Naive thymus-derived CD4-positive, alpha-beta T cell (primary cell): ENCODE measurements at regions of chr6 and their contacts with region 1.

Region 1: DNA sequence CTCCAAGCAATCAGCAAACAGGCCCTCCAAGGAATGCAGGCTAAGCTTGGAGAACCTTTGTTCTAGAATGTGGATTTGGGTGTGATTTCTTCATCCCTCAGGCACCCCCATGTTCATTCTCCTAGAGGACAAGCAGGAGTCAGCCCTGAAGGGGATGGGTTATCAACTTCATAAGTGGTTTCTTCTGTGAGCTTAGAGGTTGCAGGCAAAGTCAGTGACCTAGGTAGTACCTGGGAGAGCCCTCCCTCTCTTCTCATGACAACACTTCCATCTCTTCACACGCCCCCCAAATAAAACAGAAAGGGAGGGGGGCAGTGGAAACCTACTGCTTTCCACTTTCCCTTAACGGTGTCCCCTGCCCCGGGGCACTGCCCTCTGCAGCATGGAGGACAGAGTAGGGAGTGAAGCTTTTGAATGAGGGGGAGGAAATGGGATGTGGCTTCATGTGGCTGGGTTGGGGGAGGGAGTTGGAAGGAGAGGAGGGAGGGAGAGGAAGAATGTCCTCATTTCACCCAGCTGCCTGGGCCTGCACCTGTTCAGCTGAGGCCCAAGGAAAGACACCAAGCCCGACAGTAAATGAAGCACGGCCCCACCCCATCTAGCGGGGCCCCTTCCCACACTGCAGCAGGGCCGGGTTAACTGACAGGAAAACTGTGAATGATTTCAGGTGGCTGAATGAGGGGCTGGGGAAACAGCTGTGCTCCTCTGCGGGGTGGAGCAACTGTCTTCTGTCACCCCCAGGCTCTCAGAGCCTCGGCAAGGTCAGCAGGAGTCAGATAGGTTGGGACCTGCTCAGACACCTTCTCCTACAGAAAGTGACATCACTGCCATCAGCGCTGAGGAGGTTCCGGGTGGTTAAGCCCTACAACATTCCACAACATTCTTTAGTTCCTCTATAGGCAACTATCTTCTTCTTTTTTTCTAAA is 40.1 kb upstream of the TAF8 start:
- DNase-seq: peak in 3 of 9 donors; percentile 21 to 35 (median 30)
- ATAC-seq: peak; percentile 53
- H3K4me3 ChIP-seq: no peak overlapping the region
- H3K4me3 Mint-ChIP-seq: peak overlapping the region; percentile 54 to 84 (median 72)
- H3K27ac ChIP-seq: peak overlapping the region; percentile 65
- H3K27ac Mint-ChIP-seq: peak overlapping the region; percentile 73 to 93 (median 88)
- H3K4me1 ChIP-seq: peaks cover 37 to 56% of the 10 kb centered on the region in 2 donors
- H3K4me1 Mint-ChIP-seq: peaks cover 71 to 90% (median 83%) of the 10 kb centered on the region in 7 donors
- H3K27me3 ChIP-seq: no peaks in the 10 kb centered on the region
- H3K27me3 Mint-ChIP-seq: no peaks in the 10 kb centered on the region

Region 2: DNA sequence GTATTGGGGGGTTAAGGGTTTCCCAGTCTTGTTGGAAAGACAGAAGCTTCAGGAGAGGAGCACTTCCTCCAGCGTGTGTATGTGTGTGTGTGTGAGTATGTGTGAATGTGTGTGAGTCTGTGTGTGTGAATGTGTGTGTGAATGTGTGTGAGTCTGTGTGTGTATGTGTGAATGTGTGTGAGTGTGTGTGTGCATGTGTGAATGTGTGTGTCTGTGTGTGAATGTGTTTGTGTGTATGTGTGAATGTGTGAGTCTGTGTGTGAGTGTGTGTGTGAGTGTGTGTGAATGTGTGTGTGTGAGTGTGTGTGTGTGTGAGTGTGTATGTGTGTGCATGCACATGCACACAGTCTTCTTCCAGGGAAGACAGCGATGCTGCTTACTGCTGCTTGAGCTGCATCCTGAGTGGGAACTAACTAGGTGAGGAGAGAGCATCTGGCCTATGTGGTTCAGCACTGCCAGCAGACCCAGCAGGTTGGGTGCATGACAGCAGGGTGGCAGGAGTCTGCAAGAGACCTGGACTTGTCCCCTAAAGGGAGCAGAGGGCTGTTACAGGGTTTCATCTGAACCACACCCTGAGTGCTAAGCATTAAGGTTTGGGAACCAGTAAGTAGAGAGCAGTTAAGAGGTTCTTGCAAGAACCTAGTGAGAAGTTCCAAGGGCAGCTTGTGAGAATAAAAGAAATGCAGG is 45.9 kb before region 1 on chr6:
- CTCF ChIA-PET with region 1: no interaction called
- POLR2A ChIA-PET with region 1: no interaction called
- intact Hi-C with region 1: loop called in 1 of 2 experiments (anchors 5 kb)
- DNase-seq: peak in 1 of 9 donors; percentile 17
- ATAC-seq: no peak
- H3K4me3 ChIP-seq: no peak overlapping the region
- H3K4me3 Mint-ChIP-seq: peak overlapping the region in 7 of 10 donors; percentile 2 to 46 (median 6)
- H3K27ac ChIP-seq: peak overlapping the region; percentile 55
- H3K27ac Mint-ChIP-seq: peak overlapping the region; percentile 3 to 77 (median 69)
- H3K4me1 ChIP-seq: peaks cover 31 to 46% of the 10 kb centered on the region in 2 donors
- H3K4me1 Mint-ChIP-seq: peaks cover 52 to 94% (median 77%) of the 10 kb centered on the region in 7 donors
- H3K27me3 ChIP-seq: no peaks in the 10 kb centered on the region
- H3K27me3 Mint-ChIP-seq: no peaks in the 10 kb centered on the region

Region 3: DNA sequence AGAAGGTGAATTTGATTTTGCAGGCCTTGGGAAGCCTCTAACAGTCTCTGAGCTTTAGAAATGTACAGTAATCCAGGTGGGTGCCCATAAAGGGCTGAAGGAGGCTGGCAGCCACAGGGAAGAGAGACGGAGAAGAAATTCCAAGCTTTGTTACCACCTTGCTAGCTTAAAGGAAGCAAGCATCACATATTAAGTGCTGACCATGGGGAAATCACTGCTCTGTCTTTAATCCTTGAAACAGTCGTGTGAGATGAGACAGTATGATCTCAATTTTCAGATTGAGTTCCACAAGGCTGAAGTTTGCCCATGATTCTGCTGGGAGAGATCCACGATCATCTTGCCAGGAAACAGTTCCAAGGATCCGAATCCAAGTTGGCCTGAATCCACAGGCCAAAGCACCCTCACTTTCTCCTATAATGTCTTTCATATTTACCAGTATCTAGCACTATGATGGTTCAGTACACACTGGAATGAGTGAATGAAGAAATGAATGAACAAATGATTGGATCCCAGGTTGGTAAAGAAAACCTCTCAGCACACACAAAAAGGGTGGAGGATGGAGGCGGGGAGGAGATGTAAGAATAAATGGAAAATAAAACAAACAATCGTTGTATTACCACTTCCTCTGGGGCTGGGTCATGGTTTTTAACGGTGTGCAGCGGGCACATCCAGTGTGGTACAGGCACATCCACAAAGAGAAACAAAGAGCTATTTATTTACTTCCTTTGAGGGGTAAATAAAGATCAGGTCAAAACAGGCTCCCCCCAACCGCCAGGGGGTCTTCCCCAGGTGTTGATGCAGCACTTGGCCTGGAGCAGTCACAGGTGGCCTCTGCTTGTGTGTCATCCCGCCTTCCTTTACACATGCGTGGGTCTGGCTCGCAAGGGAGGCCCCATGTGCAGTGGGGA is 11.9 kb after region 1 on chr6:
- CTCF ChIA-PET with region 1: interaction called, 3 read pairs
- POLR2A ChIA-PET with region 1: interaction called, 4 read pairs
- intact Hi-C with region 1: loop called (anchors 1 to 2 kb)
- DNase-seq: peak in 8 of 9 donors; percentile 64 to 86 (median 77)
- ATAC-seq: peak; percentile 85
- H3K4me3 ChIP-seq: peak overlapping the region; percentile 23
- H3K4me3 Mint-ChIP-seq: peak overlapping the region; percentile 73 to 91 (median 80)
- H3K27ac ChIP-seq: peak overlapping the region; percentile 62
- H3K27ac Mint-ChIP-seq: peak overlapping the region; percentile 87 to 98 (median 95)
- H3K4me1 ChIP-seq: peaks cover 69 to 72% of the 10 kb centered on the region in 2 donors
- H3K4me1 Mint-ChIP-seq: peaks cover 59 to 94% (median 78%) of the 10 kb centered on the region in 7 donors
- H3K27me3 ChIP-seq: no peaks in the 10 kb centered on the region
- H3K27me3 Mint-ChIP-seq: no peaks in the 10 kb centered on the region